Prostate gland (tissue), 2 donors: ENCODE measurements at regions of chr20 and their contacts with region 1.

Region 1: DNA sequence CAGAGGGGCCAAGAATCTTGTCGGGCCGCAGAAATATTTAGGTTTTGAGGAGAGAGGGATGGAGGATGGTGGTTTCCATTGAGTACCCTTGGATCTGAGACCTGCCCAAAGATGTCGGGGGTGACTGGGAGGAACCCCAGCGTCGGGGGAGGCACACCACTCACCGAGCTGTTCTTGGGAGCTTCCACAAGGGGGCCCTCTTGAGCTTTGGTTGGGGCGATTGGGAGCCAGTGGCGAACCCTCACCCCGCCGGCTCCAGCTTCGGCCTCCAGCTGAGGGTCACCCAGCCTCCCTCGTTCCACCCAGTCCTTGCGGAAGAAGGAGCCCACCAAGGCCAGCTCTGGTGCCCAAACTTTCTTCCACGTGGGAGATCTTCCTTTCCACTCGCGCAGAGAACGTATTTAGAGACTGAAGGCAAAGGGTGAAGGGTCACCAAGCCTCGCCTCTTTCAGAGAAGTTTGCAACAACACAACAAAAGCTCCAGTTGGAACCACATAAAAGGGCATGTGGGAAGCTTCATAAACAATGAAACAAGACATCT is 33.6 kb downstream of the APCDD1L start:
- DNase-seq: no peak
- H3K4me3 ChIP-seq: no peak overlapping the region
- H3K27ac ChIP-seq: no peak overlapping the region
- H3K4me1 ChIP-seq: peaks cover 3% of the 10 kb centered on the region
- H3K27me3 ChIP-seq: no peaks in the 10 kb centered on the region
- CTCF ChIP-seq: peak; percentile 25 to 55 (median 46)
- POLR2A ChIP-seq: no peak

Region 2: GRCh38 chr20:58538752-58539151 is 57.2 kb after region 1 on chr20:
- intact Hi-C with region 1: no loop called
- DNase-seq: no peak
- H3K4me3 ChIP-seq: no peak overlapping the region
- H3K27ac ChIP-seq: no peak overlapping the region
- H3K4me1 ChIP-seq: no peaks in the 10 kb centered on the region
- H3K27me3 ChIP-seq: no peaks in the 10 kb centered on the region
- CTCF ChIP-seq: no peak
- POLR2A ChIP-seq: no peak

Region 3: DNA sequence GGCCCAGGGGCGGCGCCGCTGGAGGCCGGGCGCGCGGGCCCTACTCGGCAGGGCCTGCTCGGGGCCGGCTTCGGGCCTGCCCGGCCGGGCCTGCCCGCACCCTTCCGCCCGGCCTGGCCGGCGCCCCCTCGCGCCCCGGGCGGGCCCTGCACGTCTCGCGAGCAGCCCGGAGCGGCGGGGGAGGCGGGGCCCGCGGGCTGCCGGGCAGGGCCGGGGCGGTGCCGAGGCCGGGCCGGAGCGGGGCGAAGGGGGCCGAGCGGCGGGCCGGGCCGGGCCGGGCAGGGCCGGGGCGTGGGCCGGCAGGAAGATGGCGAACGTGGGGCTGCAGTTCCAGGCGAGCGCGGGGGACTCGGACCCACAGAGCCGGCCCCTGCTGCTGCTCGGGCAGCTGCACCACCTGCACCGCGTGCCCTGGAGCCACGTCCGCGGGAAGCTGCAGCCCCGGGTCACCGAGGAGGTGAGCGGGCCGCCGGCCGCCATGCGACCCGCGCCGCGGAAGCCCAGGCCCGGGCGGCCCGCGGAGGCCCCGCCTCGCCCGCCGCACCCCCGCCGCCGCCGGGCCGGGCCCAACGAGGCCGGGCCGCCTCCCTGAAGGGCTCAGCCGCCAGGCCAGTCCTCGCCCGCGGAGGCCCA is 211.2 kb after region 1 on chr20 and contains the start of gene NPEPL1:
- intact Hi-C with region 1: loop called (anchors 5 kb)
- DNase-seq: peak; percentile 44
- H3K4me3 ChIP-seq: peak within 1 kb of the TSS; percentile 39 to 41
- H3K27ac ChIP-seq: peak within 1 kb of the TSS; percentile 68 to 74
- H3K4me1 ChIP-seq: peaks cover 8% of the 10 kb centered on the region
- H3K27me3 ChIP-seq: no peaks in the 10 kb centered on the region
- CTCF ChIP-seq: peak in 1 of 4 experiments; percentile 30
- POLR2A ChIP-seq: no peak
- total RNA-seq, gene NPEPL1: 25.7 to 63.1 TPM

Region 4: DNA sequence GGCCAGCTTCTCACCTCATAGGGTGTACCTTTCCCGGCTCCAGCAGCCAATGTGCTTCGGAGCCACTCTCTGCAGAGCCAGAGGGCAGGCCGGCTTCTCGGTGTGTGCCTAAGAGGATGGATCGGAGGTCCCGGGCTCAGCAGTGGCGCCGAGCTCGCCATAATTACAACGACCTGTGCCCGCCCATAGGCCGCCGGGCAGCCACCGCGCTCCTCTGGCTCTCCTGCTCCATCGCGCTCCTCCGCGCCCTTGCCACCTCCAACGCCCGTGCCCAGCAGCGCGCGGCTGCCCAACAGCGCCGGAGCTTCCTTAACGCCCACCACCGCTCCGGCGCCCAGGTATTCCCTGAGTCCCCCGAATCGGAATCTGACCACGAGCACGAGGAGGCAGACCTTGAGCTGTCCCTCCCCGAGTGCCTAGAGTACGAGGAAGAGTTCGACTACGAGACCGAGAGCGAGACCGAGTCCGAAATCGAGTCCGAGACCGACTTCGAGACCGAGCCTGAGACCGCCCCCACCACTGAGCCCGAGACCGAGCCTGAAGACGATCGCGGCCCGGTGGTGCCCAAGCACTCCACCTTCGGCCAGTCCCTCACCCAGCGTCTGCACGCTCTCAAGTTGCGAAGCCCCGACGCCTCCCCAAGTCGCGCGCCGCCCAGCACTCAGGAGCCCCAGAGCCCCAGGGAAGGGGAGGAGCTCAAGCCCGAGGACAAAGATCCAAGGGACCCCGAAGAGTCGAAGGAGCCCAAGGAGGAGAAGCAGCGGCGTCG is 358.6 kb after region 1 on chr20:
- intact Hi-C with region 1: loop called (anchors 10 kb)
- DNase-seq: no peak
- H3K4me3 ChIP-seq: peak overlapping the region in 1 of 2 donors; percentile 4
- H3K27ac ChIP-seq: no peak overlapping the region
- H3K4me1 ChIP-seq: peaks cover 3% of the 10 kb centered on the region
- H3K27me3 ChIP-seq: peaks cover 8% of the 10 kb centered on the region
- CTCF ChIP-seq: no peak
- POLR2A ChIP-seq: no peak